GM10248 (cell line): ENCODE measurements at regions of chr17 and their contacts with region 1.

Region 1: GRCh38 chr17:67824735-67825626 is at the start of gene BPTF:
- DNase-seq: peak; percentile 89
- CTCF ChIP-seq: peak; percentile 94

Region 2: GRCh38 chr17:67813803-67814180 is 11.2 kb before region 1 on chr17:
- CTCF ChIA-PET with region 1: interaction called, 36 read pairs
- POLR2A ChIA-PET with region 1: interaction called, 4 read pairs
- DNase-seq: no peak
- CTCF ChIP-seq: no peak